WTC11 (cell line): ENCODE measurements at regions of chr18 and their contacts with region 1.

Region 1: GRCh38 chr18:23131693-23132319 is 3.5 kb upstream of the CABLES1 start:
- DNase-seq: peak; percentile 44
- ATAC-seq: no peak
- H3K4me3 Mint-ChIP-seq: no peak overlapping the region
- H3K27ac Mint-ChIP-seq: peak overlapping the region; percentile 50
- H3K4me1 Mint-ChIP-seq: peaks cover 38% of the 10 kb centered on the region
- H3K27me3 Mint-ChIP-seq: no peaks in the 10 kb centered on the region; the same call in 1 of the 2 replicates
- CTCF ChIP-seq: peak; percentile 54

Region 2: DNA sequence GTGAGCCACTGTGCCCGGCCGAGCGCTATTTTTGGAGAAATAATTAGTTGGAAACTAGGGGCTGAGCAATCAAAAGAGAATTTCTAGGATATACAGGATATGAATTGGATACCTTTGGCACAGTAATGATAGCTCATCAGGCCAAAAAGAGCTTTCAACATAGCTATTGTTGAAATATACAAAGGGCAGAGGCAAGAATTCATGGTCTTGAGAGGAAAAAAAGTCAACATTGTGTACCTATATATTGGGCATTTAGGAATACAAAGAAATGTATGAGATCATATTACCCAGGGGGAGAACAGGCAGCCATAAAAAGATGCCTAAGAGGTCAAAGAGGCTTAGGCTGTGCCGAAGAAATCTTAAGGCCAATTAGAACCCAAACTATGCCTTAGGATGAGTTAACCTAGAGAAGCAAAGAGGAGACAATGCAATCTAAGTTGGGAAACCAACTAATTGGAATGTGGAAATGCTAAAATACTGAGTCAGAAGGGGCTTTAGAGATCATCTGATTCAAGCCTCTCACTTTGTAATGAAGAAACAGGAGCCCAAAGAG is 99.7 kb before region 1 on chr18:
- CTCF ChIA-PET with region 1: interaction called, 12 read pairs
- POLR2A ChIA-PET with region 1: no interaction called
- DNase-seq: no peak
- ATAC-seq: no peak
- H3K4me3 Mint-ChIP-seq: no peak overlapping the region
- H3K27ac Mint-ChIP-seq: no peak overlapping the region
- H3K4me1 Mint-ChIP-seq: peaks cover 13% of the 10 kb centered on the region
- H3K27me3 Mint-ChIP-seq: no peaks in the 10 kb centered on the region
- CTCF ChIP-seq: no peak

Region 3: DNA sequence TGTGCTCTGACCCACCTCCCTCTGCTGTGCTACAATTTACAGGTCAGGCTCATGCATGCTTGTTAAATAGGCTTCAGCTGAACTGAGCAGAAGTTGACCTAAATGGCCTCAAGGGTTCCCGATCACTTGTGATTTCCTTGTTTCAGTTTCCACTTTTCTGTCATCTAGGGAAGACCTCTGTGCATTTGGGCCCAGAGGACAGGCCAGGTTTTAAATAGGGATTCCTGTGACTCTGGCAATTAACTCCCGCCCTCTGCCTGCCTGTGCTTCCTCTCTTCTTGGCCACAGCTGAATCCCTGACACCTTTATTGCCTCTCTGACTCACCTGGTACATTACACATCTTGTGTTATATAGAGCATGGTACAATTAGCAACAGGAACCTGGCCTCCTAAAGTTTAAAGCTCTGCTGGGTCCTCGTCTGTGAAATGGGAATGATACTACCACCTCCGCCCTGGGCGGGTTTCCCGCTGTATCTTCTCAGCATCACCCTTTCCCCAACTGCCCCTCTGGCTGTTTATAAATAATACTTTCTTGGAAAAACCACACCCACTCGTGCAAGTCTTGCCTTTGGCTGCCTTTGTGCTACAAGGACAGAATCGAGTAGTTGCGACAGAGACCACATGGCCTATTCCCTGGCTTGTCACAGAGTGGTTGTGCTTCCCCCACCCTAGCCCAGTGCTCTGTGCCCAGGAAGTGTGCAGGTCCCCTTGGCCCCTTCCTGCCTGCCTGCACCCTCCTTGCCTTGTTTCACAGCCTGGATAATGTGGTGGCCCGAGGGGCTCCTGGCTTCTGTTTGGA is 11.4 kb after region 1 on chr18:
- CTCF ChIA-PET with region 1: interaction called, 12 read pairs
- POLR2A ChIA-PET with region 1: no interaction called
- DNase-seq: no peak
- ATAC-seq: no peak; the same call in 1 of the 2 replicates
- H3K4me3 Mint-ChIP-seq: no peak overlapping the region
- H3K27ac Mint-ChIP-seq: peak overlapping the region; percentile 67
- H3K4me1 Mint-ChIP-seq: peaks cover 79% of the 10 kb centered on the region
- H3K27me3 Mint-ChIP-seq: no peaks in the 10 kb centered on the region
- CTCF ChIP-seq: no peak

Region 4: DNA sequence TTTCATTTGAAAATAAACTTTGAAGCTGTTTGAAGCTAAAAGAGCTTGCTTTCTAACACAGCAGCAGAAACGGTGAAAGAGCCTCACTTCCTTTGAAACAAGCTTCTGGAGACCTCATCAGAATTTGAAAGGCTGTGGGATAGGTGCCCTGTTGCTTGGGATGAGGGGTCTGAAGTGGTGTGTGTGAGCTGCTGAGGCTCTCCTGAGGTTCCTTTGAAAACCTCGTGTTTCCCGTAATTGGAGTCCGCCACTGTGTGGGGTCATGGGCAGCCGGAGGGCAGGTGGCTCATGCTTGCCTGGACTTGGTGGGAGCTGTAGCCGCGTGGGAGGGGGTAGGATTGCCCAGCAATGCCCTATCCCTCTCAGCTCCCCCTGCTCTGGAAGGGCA is 37.8 kb after region 1 on chr18:
- CTCF ChIA-PET with region 1: interaction called, 6 read pairs
- POLR2A ChIA-PET with region 1: interaction called, 10 read pairs
- DNase-seq: peak; percentile 37
- ATAC-seq: peak; percentile 86
- H3K4me3 Mint-ChIP-seq: peak overlapping the region; percentile 58
- H3K27ac Mint-ChIP-seq: peak overlapping the region; percentile 96
- H3K4me1 Mint-ChIP-seq: peaks cover 79% of the 10 kb centered on the region
- H3K27me3 Mint-ChIP-seq: no peaks in the 10 kb centered on the region
- CTCF ChIP-seq: no peak

Region 5: GRCh38 chr18:23259701-23260582 is 128.1 kb after region 1 on chr18:
- CTCF ChIA-PET with region 1: interaction called, 14 read pairs
- POLR2A ChIA-PET with region 1: interaction called, 7 read pairs
- DNase-seq: peak; percentile 74
- ATAC-seq: peak; percentile 88
- H3K4me3 Mint-ChIP-seq: peak overlapping the region; percentile 31; the same call in 1 of the 2 replicates
- H3K27ac Mint-ChIP-seq: peak overlapping the region; percentile 97
- H3K4me1 Mint-ChIP-seq: peaks cover 51% of the 10 kb centered on the region
- H3K27me3 Mint-ChIP-seq: 0 out of 2 replicates have a peak, but pooled peaks cover 2% of the 10 kb centered on the region
- CTCF ChIP-seq: no peak

Region 6: DNA sequence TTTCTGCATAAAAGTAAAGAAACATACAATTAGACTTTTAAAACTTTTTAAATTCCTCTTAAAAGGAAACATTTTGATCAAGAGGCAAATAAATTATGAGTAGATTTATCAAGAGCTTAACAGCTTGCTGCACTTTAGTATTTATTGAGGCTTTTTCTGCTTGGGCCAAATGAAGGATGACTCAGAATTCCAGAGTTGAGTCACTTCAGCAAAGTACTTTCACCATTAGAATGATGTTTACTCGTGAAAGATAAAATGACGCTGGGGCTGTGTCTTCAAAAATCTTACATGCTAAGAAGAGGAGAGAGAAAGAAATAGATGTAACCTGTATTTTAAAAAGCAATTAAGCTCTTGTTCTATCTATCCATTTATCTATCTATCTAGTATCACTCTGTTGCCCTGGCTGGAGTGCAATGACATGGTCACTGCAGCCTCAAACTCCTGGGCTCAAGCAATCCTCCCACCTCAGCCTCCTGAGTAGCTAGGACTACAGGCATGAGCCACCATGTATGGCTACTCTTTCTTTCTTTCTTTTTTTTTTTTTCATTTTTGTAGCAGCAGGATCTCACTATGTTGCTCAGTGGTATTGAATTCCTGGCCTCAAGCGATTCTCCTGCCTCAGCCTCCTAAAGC is 246.0 kb after region 1 on chr18:
- CTCF ChIA-PET with region 1: interaction called, 46 read pairs
- POLR2A ChIA-PET with region 1: interaction called, 7 read pairs
- DNase-seq: no peak
- ATAC-seq: no peak
- H3K4me3 Mint-ChIP-seq: no peak overlapping the region
- H3K27ac Mint-ChIP-seq: no peak overlapping the region
- H3K4me1 Mint-ChIP-seq: peaks cover 10% of the 10 kb centered on the region
- H3K27me3 Mint-ChIP-seq: no peaks in the 10 kb centered on the region
- CTCF ChIP-seq: no peak

Region 7: GRCh38 chr18:23412351-23412964 is 280.7 kb after region 1 on chr18:
- CTCF ChIA-PET with region 1: interaction called, 10 read pairs
- POLR2A ChIA-PET with region 1: no interaction called
- DNase-seq: no peak
- ATAC-seq: no peak
- H3K4me3 Mint-ChIP-seq: no peak overlapping the region
- H3K27ac Mint-ChIP-seq: no peak overlapping the region
- H3K4me1 Mint-ChIP-seq: no peaks in the 10 kb centered on the region
- H3K27me3 Mint-ChIP-seq: no peaks in the 10 kb centered on the region
- CTCF ChIP-seq: no peak